Activated CD4-positive, alpha-beta T cell treated with anti-CD3 and anti-CD28 coated beads for 36 hours (primary cell): ENCODE measurements at regions of chr2 and their contacts with region 1.

Region 1: DNA sequence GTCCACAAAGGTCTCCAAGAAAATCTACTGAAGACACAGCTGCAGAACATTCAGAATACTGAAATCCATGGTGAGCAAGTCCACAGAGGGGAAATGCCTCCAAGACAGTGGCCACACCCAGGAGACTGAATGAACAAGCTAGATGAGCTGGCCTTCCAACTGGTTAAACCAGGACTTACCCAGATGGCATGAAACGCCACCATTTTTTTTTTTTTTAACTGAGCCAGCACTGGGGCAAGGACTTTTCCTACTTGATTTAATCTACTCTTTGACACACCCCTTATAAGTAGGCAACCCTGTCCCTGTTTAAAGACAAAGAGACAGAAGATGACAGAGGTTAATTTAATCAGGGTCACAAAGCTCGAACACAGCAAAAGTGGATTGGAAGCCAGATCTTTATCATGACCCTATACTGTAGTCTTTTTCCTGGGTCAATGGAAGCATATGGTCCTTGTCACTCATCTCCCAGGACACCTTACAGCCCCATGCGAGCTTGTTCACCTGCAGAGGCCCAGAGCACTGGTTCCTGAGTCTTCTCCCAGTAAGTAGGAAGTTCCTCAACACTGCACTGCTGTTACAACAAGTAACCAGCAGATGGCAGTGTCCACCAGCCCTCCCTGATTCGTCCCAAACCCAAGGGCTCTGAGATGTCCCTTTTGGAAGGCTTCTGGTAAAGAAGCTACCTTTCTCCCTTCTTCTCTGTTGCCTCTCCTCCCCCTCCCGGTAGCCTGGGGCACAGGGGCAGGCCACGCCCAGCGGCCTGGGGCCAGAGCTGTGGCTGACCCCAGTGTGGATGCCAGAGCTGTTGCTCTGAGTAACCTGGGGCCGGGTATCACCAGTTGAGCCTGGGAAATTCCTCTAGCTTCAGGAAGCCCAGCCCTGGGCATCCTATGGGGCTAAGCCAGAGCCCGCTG is 5.6 kb upstream of the GDF7 start:
- DNase-seq: peak; percentile 77
- ATAC-seq: peak; percentile 79
- H3K4me3 Mint-ChIP-seq: no peak overlapping the region
- H3K27ac Mint-ChIP-seq: no peak overlapping the region
- H3K4me1 Mint-ChIP-seq: peaks cover 6% of the 10 kb centered on the region
- H3K27me3 Mint-ChIP-seq: peaks cover 42% of the 10 kb centered on the region

Region 2: DNA sequence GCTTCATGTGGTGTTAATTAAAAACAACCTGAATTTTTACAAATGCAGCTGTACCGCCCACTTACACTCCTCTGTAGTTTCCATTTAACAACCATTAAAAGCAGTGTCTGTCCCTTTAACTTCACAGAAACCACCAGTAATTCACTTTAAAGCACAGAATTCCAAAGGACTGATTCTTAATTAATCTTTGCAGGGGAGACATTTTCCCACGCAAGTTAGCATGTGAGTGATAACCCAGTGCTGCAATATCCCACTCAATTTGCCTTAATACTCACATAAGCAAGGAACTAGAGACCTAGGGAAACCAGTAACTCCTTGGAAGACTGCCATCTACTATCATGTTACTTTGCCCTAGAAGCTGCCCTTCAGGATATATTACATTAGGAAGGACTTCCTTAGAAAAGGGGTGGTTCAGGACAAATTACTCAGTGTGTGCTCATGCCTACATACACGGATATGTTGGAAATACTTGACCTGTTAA is 1405.2 kb before region 1 on chr2:
- CTCF ChIA-PET with region 1: no interaction called
- POLR2A ChIA-PET with region 1: no interaction called
- intact Hi-C with region 1: no loop called
- DNase-seq: no peak
- ATAC-seq: no peak
- H3K4me3 Mint-ChIP-seq: no peak overlapping the region
- H3K27ac Mint-ChIP-seq: no peak overlapping the region
- H3K4me1 Mint-ChIP-seq: no peaks in the 10 kb centered on the region
- H3K27me3 Mint-ChIP-seq: peaks cover 4% of the 10 kb centered on the region

Region 3: GRCh38 chr2:20466417-20466911 is 194.9 kb before region 1 on chr2:
- CTCF ChIA-PET with region 1: no interaction called
- POLR2A ChIA-PET with region 1: no interaction called
- intact Hi-C with region 1: no loop called
- DNase-seq: no peak
- ATAC-seq: no peak
- H3K4me3 Mint-ChIP-seq: no peak overlapping the region
- H3K27ac Mint-ChIP-seq: no peak overlapping the region
- H3K4me1 Mint-ChIP-seq: no peaks in the 10 kb centered on the region
- H3K27me3 Mint-ChIP-seq: peaks cover 6% of the 10 kb centered on the region

Region 4: DNA sequence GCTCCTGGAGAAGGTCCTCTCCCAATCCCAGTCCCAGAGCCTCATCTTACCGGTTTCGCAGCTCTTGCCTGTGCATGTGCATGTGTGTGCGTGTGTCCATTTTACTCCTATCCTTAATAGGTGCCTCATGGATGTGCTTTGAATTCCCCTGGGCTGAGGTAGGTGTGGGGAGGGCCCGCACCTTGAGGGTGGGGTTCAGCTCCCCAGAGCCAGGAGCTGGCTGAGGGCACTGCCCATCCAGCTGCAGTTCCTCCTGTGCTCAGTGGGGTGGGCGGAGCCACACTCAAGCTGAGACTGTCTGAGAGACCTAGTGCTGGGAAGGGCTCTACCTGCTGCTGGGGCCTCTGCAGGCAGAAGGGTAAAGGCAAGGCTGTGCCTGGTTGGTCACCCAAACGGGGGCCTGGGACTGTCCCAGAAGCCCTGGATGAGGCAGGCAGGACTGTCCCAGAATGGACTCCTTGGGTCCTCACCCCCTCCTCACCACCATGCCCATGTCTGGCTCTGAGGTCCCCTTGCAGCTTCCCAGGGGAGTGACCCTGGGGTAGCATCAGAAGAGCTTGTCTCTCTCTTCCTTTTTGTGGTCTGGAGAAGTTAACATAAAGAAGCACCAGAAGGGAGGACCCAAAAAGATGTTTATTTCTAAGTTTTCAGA is 14.5 kb after region 1 on chr2:
- CTCF ChIA-PET with region 1: interaction called, 23 read pairs
- POLR2A ChIA-PET with region 1: no interaction called
- intact Hi-C with region 1: no loop called
- DNase-seq: no peak
- ATAC-seq: peak; percentile 83
- H3K4me3 Mint-ChIP-seq: no peak overlapping the region
- H3K27ac Mint-ChIP-seq: no peak overlapping the region
- H3K4me1 Mint-ChIP-seq: no peaks in the 10 kb centered on the region
- H3K27me3 Mint-ChIP-seq: peaks cover 13% of the 10 kb centered on the region

Region 5: GRCh38 chr2:20822535-20823490 is 161.5 kb after region 1 on chr2 and contains the start of gene LDAH:
- CTCF ChIA-PET with region 1: interaction called, 5 read pairs
- POLR2A ChIA-PET with region 1: no interaction called
- intact Hi-C with region 1: loop called (anchors 5 to 10 kb)
- DNase-seq: peak; percentile 92
- ATAC-seq: peak; percentile 79
- H3K4me3 Mint-ChIP-seq: peak within 1 kb of the TSS; percentile 98
- H3K27ac Mint-ChIP-seq: peak within 1 kb of the TSS; percentile 99
- H3K4me1 Mint-ChIP-seq: peaks cover 26% of the 10 kb centered on the region
- H3K27me3 Mint-ChIP-seq: no peaks in the 10 kb centered on the region
- total RNA-seq, gene LDAH: 27.0 to 32.8 TPM

Region 6: DNA sequence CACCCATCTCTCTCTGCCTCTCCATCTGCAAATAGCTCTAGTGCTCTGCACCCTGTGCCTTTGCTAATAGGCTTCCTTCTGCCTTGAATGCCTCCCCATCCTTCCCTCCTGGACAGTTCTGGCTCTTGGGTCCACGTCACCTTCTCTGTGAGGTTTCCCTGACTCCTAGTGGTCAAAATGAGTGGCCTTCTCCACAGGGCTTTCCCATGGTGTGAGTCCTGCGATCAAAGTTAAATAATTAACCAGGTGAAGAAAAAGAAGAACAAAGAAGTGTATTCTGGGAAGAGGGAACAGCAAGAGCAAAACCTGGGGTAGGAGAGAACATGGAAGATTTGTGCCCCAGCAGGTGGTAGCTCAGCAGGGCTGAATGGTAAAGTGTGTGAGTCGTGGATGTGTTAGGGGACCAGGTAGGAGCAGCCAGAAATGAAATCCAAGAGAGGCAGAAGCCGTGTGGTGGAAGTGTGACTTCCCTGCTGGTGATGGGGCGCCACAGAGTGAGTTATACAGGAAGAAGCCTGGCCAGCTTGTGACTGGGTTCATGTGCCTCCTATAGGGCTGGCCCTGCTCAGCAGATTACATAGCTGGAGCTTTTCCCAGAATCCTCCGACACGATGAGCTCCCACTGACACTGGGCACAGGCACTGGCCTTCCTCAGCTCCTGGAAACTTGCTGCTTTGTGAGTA is 255.4 kb after region 1 on chr2:
- CTCF ChIA-PET with region 1: no interaction called
- POLR2A ChIA-PET with region 1: no interaction called
- intact Hi-C with region 1: no loop called
- DNase-seq: no peak
- ATAC-seq: no peak
- H3K4me3 Mint-ChIP-seq: no peak overlapping the region
- H3K27ac Mint-ChIP-seq: no peak overlapping the region
- H3K4me1 Mint-ChIP-seq: no peaks in the 10 kb centered on the region
- H3K27me3 Mint-ChIP-seq: peaks cover 18% of the 10 kb centered on the region

Region 7: DNA sequence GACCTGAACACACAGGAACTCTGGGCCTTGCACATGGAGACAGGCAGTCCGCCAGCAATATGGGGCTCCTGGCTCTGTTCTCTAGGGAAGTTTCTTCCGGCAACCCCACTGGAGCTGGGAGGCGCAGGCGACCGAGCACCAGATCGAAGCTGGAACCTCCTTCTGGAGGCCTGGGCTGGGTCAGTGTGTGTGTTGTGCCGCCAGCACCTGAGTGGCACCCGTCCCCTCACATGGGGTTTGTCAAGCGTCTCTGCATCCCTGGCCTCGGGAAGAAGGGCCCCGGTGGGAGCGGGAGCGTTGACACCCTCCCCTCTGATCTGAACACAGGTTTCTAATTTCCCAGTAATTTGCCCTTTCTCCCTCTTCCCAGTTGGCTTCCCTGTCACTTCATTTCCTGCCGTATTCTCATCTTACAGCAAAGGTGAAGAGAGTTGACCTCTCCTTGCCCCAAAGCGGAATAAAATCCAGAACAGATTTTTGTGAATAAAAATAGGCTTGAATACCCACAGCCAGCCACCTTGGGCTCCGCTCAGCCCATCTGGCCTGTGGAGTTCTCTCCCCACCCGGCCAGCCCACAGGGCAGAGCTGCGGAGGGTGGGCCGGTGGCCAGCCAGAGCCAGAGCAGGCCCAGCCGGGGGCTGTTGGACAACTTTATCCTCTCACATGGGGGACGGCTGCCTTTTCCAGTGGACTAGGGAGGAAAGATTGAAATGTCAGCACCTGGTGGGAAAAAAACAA is 296.6 kb after region 1 on chr2:
- CTCF ChIA-PET with region 1: interaction called, 100 read pairs
- POLR2A ChIA-PET with region 1: interaction called, 9 read pairs
- intact Hi-C with region 1: loop called (anchors 1 kb)
- DNase-seq: no peak
- ATAC-seq: no peak
- H3K4me3 Mint-ChIP-seq: no peak overlapping the region
- H3K27ac Mint-ChIP-seq: no peak overlapping the region
- H3K4me1 Mint-ChIP-seq: no peaks in the 10 kb centered on the region
- H3K27me3 Mint-ChIP-seq: peaks cover 9% of the 10 kb centered on the region

Region 8: GRCh38 chr2:21118302-21118920 is 457.1 kb after region 1 on chr2:
- CTCF ChIA-PET with region 1: interaction called, 5 read pairs
- POLR2A ChIA-PET with region 1: no interaction called
- intact Hi-C with region 1: loop called (anchors 1 to 5 kb)
- DNase-seq: peak; percentile 39
- ATAC-seq: no peak
- H3K4me3 Mint-ChIP-seq: no peak overlapping the region
- H3K27ac Mint-ChIP-seq: no peak overlapping the region
- H3K4me1 Mint-ChIP-seq: no peaks in the 10 kb centered on the region
- H3K27me3 Mint-ChIP-seq: peaks cover 5% of the 10 kb centered on the region